ENCODE measurements at regions of chr2 and their contacts with region 1.

Region 1: GRCh38 chr2:101831351-101831865 is 133.9 kb downstream of the MAP4K4 start:
- DNase-seq: peak; percentile 37
- H3K4me3 ChIP-seq: no peak overlapping the region
- H3K27ac ChIP-seq: no peak overlapping the region
- H3K27me3 ChIP-seq: no peaks in the 10 kb centered on the region
- CTCF ChIP-seq: peak; percentile 82

Region 2: GRCh38 chr2:101349893-101350662 is 481.3 kb before region 1 on chr2:
- CTCF ChIA-PET with region 1: interaction called, 10 read pairs
- POLR2A ChIA-PET with region 1: no interaction called
- DNase-seq: peak; percentile 11
- H3K4me3 ChIP-seq: no peak overlapping the region
- H3K27ac ChIP-seq: no peak overlapping the region
- H3K27me3 ChIP-seq: no peaks in the 10 kb centered on the region
- CTCF ChIP-seq: peak; percentile 66

Region 3: GRCh38 chr2:101617188-101617587 is 214.2 kb before region 1 on chr2:
- CTCF ChIA-PET with region 1: interaction called, 11 read pairs
- POLR2A ChIA-PET with region 1: no interaction called
- DNase-seq: peak; percentile 64
- H3K4me3 ChIP-seq: no peak overlapping the region
- H3K27ac ChIP-seq: peak overlapping the region; percentile 86
- H3K27me3 ChIP-seq: no peaks in the 10 kb centered on the region
- CTCF ChIP-seq: no peak

Region 4: DNA sequence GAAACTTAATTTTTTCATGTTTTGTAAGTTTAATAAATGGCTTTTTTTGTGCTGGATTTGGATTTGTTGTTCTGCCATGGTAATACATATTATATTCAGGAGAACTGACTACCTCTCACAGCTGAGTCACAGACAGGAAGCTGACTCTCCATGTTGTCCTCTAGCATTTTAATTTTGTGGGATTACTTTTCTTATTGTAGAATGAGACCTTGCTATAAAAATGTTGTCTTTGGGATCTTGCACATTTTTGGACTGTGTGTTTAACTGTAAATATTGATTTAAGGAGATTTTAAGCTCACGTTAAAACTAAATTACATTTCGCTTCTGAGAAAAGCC is 85.1 kb before region 1 on chr2:
- CTCF ChIA-PET with region 1: interaction called, 10 read pairs
- POLR2A ChIA-PET with region 1: no interaction called
- DNase-seq: peak; percentile 38
- H3K4me3 ChIP-seq: no peak overlapping the region
- H3K27ac ChIP-seq: peak overlapping the region; percentile 73
- H3K27me3 ChIP-seq: no peaks in the 10 kb centered on the region
- CTCF ChIP-seq: no peak

Region 5: DNA sequence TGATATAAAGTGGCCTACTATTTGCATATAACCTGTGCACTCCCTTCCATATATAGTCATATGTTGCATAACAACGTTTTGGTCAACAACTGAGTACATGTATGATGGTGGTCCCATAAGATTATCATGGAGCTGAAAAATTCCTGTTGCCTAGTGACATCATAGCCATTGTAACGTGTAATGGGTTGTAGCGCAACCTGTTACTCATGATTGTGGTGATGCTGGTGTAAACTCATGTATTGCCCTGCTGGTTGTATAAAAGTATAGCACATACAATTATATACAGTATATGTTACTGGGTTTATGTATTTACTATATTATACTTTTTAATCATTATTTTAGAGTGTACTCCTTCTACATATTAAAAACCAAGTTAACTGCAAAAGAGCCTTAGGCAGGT is 15.6 kb after region 1 on chr2:
- CTCF ChIA-PET with region 1: interaction called, 13 read pairs
- POLR2A ChIA-PET with region 1: no interaction called
- DNase-seq: no peak
- H3K4me3 ChIP-seq: no peak overlapping the region
- H3K27ac ChIP-seq: no peak overlapping the region
- H3K27me3 ChIP-seq: no peaks in the 10 kb centered on the region
- CTCF ChIP-seq: no peak

Region 6: GRCh38 chr2:102025016-102025501 is 193.7 kb after region 1 on chr2:
- CTCF ChIA-PET with region 1: no interaction called
- POLR2A ChIA-PET with region 1: no interaction called
- DNase-seq: no peak
- H3K4me3 ChIP-seq: no peak overlapping the region
- H3K27ac ChIP-seq: no peak overlapping the region
- H3K27me3 ChIP-seq: no peaks in the 10 kb centered on the region
- CTCF ChIP-seq: no peak